ENCODE measurements at regions of chr3 and their contacts with region 1.

Region 1: DNA sequence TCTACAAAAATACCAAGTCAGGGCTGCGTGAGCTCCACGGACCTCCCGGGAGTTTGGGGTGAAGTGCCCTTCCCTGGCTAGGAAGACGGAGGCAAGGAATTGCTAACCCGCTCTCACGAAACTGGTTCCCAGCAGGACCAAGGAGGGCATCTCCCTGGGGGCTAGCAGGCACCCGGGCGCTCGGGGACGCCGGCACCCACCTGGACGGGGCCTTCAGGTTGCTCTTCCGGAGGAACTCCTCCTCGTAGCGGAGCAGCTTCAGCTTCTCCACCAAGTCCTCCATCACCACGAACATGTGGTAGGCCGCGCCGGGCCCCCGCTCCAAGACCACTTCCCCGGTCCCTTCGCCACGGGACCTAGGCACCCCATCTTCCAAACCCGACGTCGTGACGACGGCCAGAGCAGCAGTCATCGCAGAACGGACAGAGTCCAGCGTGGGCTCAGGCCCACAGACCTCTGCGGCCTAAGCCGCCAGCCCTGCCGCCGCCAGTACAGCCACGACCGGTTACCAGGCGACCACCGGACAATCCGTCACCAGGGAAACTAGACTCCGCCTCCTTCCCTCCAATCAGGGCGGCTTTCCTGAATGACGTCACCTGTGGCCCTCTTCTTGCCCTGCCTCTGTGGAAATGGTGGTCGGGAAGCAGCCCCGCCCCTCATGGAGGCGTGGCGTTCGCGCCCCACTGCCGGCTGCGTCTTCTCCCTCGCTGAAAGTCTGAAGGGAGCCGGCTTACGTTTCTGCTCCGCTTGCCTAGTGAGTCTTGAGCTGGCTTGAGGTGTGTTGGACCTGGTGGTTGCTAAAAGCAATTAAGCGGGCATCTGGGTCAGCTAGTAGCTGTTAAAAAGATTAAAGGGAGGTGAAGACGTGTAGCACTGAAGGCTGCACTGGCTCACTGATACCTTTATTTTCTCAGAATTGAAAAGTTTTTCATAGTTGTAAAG is at the start of gene IFT57:
- DNase-seq: peak; percentile 96 to 97 (median 97)
- H3K4me3 ChIP-seq: peak within 1 kb of the TSS; percentile 66 to 91
- H3K4me3 Mint-ChIP-seq: peak within 1 kb of the TSS; percentile 95 to 99 (median 98)
- H3K27ac ChIP-seq: peak within 1 kb of the TSS; percentile 95
- H3K27ac Mint-ChIP-seq: peak within 1 kb of the TSS; percentile 100
- H3K4me1 ChIP-seq: peaks cover 49% of the 10 kb centered on the region
- H3K4me1 Mint-ChIP-seq: peaks cover 37 to 57% (median 47%) of the 10 kb centered on the region in 4 donors
- H3K27me3 ChIP-seq: no peaks in the 10 kb centered on the region
- H3K27me3 Mint-ChIP-seq: peaks cover 0 to 1% of the 10 kb centered on the region in 2 donors
- total RNA-seq, gene IFT57: 24.1 to 26.1 TPM

Region 2: DNA sequence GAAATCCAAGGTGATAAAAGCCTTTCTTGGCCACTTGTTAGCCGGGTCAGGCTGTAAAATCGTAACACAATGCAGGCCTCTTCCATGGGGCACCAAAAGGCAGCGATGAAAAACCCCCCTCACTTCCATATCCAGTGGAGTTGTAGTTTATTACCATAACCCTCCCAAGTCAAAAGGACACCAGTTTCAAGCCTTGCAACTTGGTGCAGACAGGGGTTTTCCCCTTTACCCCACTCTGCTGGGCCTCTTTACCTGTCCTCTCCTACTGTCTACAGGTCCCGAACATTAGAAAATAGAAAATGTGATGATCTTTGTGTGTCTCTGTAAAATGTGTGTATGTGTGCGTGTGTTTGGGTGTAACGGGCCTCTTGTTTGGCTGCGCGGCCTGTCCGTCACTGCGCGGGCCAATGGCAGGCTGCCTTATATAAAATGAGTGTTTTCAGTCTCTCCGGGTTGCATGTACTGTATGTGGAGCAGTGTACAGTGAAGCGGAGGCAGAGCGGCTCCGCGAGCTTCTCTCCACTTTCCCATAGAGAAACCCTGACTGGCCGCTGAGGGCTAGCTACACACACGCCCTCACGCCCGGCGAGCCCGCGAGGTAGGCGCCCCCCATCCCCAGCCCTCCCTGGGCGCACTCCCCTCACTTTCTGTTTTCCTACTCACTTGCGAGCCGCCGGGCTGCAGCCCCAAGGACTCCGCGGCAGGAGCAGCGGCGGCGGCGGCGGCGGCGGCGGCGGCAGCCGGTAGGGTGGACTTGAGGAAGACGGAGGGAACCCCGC is 699.5 kb before region 1 on chr3 and contains the start of gene BBX:
- CTCF ChIA-PET with region 1: no interaction called
- POLR2A ChIA-PET with region 1: interaction called, 3 read pairs
- intact Hi-C with region 1: loop called (anchors 2 kb)
- DNase-seq: peak; percentile 92 to 98 (median 96)
- H3K4me3 ChIP-seq: peak within 1 kb of the TSS; percentile 70 to 88
- H3K4me3 Mint-ChIP-seq: peak within 1 kb of the TSS; percentile 97 to 99 (median 98)
- H3K27ac ChIP-seq: peak within 1 kb of the TSS; percentile 87
- H3K27ac Mint-ChIP-seq: peak within 1 kb of the TSS; percentile 88 to 98 (median 97)
- H3K4me1 ChIP-seq: peaks cover 29% of the 10 kb centered on the region
- H3K4me1 Mint-ChIP-seq: peaks cover 21 to 29% (median 25%) of the 10 kb centered on the region in 4 donors
- H3K27me3 ChIP-seq: no peaks in the 10 kb centered on the region
- H3K27me3 Mint-ChIP-seq: no peaks in the 10 kb centered on the region
- total RNA-seq, gene BBX: 93.9 to 99.1 TPM

Region 3: DNA sequence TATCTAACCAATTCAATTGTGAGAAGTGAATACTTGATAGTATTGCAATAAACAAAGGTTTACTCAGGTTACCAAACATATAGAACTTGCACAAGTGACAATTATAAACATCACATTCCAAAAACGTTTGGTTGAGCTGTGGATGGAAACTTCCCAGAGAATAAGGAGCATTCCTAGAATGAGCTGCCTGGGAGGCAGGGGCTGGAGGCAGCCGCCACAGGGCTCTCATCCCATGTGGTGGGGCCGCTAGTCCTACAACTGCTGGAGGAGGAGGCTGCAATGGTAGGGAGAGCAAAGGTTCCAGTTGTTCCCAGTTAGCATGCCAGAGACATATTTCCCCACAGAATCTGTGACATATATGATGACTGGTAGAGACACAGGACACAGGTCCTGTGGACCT is 181.7 kb before region 1 on chr3:
- CTCF ChIA-PET with region 1: no interaction called
- POLR2A ChIA-PET with region 1: interaction called, 4 read pairs
- intact Hi-C with region 1: loop called (anchors 5 kb)
- DNase-seq: no peak
- H3K4me3 ChIP-seq: no peak overlapping the region
- H3K4me3 Mint-ChIP-seq: no peak overlapping the region
- H3K27ac ChIP-seq: no peak overlapping the region
- H3K27ac Mint-ChIP-seq: peak overlapping the region in 3 of 7 donors; percentile 42 to 56 (median 50)
- H3K4me1 ChIP-seq: no peaks in the 10 kb centered on the region
- H3K4me1 Mint-ChIP-seq: peaks cover 15 to 41% (median 20%) of the 10 kb centered on the region in 4 donors
- H3K27me3 ChIP-seq: no peaks in the 10 kb centered on the region
- H3K27me3 Mint-ChIP-seq: no peaks in the 10 kb centered on the region

Region 4: GRCh38 chr3:108124337-108125152 is 97.6 kb before region 1 on chr3:
- CTCF ChIA-PET with region 1: interaction called, 4 read pairs
- POLR2A ChIA-PET with region 1: interaction called, 133 read pairs
- intact Hi-C with region 1: loop called (anchors 1 kb)
- DNase-seq: peak; percentile 74 to 90 (median 79)
- H3K4me3 ChIP-seq: peak overlapping the region; percentile 71 to 87
- H3K4me3 Mint-ChIP-seq: peak overlapping the region; percentile 84 to 94 (median 92)
- H3K27ac ChIP-seq: peak overlapping the region; percentile 86
- H3K27ac Mint-ChIP-seq: peak overlapping the region; percentile 92 to 100 (median 98)
- H3K4me1 ChIP-seq: peaks cover 69% of the 10 kb centered on the region
- H3K4me1 Mint-ChIP-seq: peaks cover 58 to 86% (median 73%) of the 10 kb centered on the region in 4 donors
- H3K27me3 ChIP-seq: no peaks in the 10 kb centered on the region
- H3K27me3 Mint-ChIP-seq: no peaks in the 10 kb centered on the region

Region 5: DNA sequence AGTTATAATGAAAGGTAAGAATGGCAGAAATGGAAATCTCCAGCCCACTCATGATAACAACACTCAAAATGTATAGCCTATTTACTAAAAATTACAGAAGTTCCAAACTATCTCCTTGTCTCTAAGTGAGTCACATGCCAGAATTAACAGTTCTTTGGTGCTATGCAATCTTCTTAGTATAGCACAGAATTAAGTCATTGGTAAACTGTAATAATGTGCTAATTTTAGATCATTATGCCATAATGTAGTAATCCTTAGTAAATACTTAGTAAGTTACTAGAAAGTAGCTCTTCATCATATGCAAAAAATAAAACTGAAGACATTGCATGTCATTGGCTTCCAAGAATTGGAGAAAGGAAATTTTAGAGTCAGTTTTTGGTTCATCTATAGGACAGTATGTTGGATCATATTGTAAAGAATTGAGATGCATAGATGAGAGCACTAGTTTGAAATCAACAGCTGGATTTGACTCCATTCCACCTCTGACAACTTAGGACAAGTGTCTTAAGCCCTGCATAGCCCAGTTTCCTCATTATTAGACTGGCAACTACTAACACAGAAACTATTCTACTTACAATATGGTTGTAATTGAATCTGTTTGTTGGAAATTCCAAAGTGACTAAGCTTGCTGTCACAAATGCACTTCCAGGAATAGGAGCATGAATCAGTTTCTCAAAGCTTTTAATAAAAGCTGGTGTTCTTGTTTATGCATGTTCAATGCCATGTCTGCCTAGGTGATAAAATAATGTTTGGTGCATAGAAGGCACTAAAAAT is 91.3 kb before region 1 on chr3:
- CTCF ChIA-PET with region 1: interaction called, 4 read pairs
- POLR2A ChIA-PET with region 1: interaction called, 133 read pairs
- intact Hi-C with region 1: no loop called
- DNase-seq: no peak
- H3K4me3 ChIP-seq: no peak overlapping the region
- H3K4me3 Mint-ChIP-seq: peak overlapping the region in 4 of 8 donors; percentile 5 to 70 (median 38)
- H3K27ac ChIP-seq: no peak overlapping the region
- H3K27ac Mint-ChIP-seq: peak overlapping the region in 2 of 7 donors; percentile 3 to 54
- H3K4me1 ChIP-seq: peaks cover 97% of the 10 kb centered on the region
- H3K4me1 Mint-ChIP-seq: peaks cover 69 to 95% (median 80%) of the 10 kb centered on the region in 4 donors
- H3K27me3 ChIP-seq: no peaks in the 10 kb centered on the region
- H3K27me3 Mint-ChIP-seq: no peaks in the 10 kb centered on the region

Region 6: DNA sequence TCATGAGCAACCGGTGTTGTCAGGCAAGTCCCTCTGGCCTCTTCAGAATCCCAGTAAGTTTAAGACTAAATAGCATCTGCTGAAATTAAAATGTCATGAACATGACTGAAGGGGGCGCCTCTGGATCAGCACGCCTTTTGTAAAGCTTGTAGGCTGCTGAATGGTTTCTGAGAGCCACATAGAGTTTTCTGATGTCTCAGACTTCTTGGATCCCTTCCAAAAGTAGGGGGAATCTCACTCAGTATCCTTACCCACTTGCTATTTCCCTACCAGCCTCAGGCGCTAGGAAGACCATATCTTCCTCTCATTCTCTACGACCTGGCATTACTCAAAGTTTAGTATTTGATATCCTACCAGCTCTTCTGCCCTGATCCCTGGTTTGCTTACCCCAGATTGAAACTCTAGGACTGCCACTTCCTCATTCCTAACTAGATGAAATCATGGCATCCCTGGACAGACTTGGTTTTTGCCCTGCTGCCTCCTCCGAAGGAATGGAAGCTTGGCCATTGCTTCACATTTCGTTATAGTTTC is 68.7 kb before region 1 on chr3:
- CTCF ChIA-PET with region 1: no interaction called
- POLR2A ChIA-PET with region 1: no interaction called
- intact Hi-C with region 1: no loop called
- DNase-seq: peak; percentile 38 to 46 (median 43)
- H3K4me3 ChIP-seq: no peak overlapping the region
- H3K4me3 Mint-ChIP-seq: no peak overlapping the region
- H3K27ac ChIP-seq: no peak overlapping the region
- H3K27ac Mint-ChIP-seq: peak overlapping the region in 3 of 7 donors; percentile 14 to 45 (median 29)
- H3K4me1 ChIP-seq: no peaks in the 10 kb centered on the region
- H3K4me1 Mint-ChIP-seq: peaks cover 5 to 14% (median 12%) of the 10 kb centered on the region in 4 donors
- H3K27me3 ChIP-seq: no peaks in the 10 kb centered on the region
- H3K27me3 Mint-ChIP-seq: no peaks in the 10 kb centered on the region

Region 7: DNA sequence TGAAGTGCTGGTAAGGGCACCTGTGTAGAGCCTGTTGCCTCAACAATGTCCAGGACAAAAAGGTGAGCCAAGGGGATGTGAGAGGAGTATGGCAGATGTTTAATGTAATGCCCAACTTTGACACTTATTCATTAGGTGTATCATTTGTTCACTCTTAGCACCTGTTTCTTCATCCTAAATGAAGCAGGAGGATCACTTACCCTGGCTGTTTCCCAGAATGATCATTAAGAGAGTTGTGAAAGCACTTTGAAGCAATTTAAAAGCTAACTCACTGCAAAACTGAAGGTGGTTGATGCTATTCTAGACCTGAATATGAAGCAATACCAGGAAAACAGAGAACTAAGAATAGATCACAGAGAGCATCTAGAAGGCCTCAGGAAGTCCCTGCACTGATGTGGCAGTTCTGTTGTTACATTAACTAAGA is 70.7 kb after region 1 on chr3:
- CTCF ChIA-PET with region 1: no interaction called
- POLR2A ChIA-PET with region 1: interaction called, 18 read pairs
- intact Hi-C with region 1: loop called (anchors 5 kb)
- DNase-seq: peak in 3 of 5 donors; percentile 15 to 20 (median 16)
- H3K4me3 ChIP-seq: no peak overlapping the region
- H3K4me3 Mint-ChIP-seq: peak overlapping the region in 5 of 8 donors; percentile 22 to 67 (median 41)
- H3K27ac ChIP-seq: peak overlapping the region; percentile 9
- H3K27ac Mint-ChIP-seq: peak overlapping the region; percentile 3 to 82 (median 71)
- H3K4me1 ChIP-seq: peaks cover 22% of the 10 kb centered on the region
- H3K4me1 Mint-ChIP-seq: peaks cover 22 to 30% (median 29%) of the 10 kb centered on the region in 4 donors
- H3K27me3 ChIP-seq: no peaks in the 10 kb centered on the region
- H3K27me3 Mint-ChIP-seq: no peaks in the 10 kb centered on the region

Region 8: GRCh38 chr3:108376026-108376425 is 153.8 kb after region 1 on chr3:
- CTCF ChIA-PET with region 1: no interaction called
- POLR2A ChIA-PET with region 1: no interaction called
- intact Hi-C with region 1: no loop called
- DNase-seq: no peak
- H3K4me3 ChIP-seq: no peak overlapping the region
- H3K4me3 Mint-ChIP-seq: no peak overlapping the region
- H3K27ac ChIP-seq: no peak overlapping the region
- H3K27ac Mint-ChIP-seq: no peak overlapping the region
- H3K4me1 ChIP-seq: no peaks in the 10 kb centered on the region
- H3K4me1 Mint-ChIP-seq: no peaks in the 10 kb centered on the region
- H3K27me3 ChIP-seq: no peaks in the 10 kb centered on the region
- H3K27me3 Mint-ChIP-seq: no peaks in the 10 kb centered on the region

Region 9: GRCh38 chr3:108602249-108602934 is 380.2 kb after region 1 on chr3:
- CTCF ChIA-PET with region 1: no interaction called
- POLR2A ChIA-PET with region 1: interaction called, 5 read pairs
- intact Hi-C with region 1: loop called (anchors 5 kb)
- DNase-seq: peak; percentile 38 to 63 (median 50)
- H3K4me3 ChIP-seq: peak overlapping the region in 1 of 2 donors; percentile 27
- H3K4me3 Mint-ChIP-seq: peak overlapping the region; percentile 54 to 86 (median 82)
- H3K27ac ChIP-seq: peak overlapping the region; percentile 56
- H3K27ac Mint-ChIP-seq: peak overlapping the region; percentile 63 to 99 (median 91)
- H3K4me1 ChIP-seq: peaks cover 59% of the 10 kb centered on the region
- H3K4me1 Mint-ChIP-seq: peaks cover 37 to 68% (median 43%) of the 10 kb centered on the region in 4 donors
- H3K27me3 ChIP-seq: no peaks in the 10 kb centered on the region
- H3K27me3 Mint-ChIP-seq: no peaks in the 10 kb centered on the region